CD4-positive, alpha-beta memory T cell (primary cell): ENCODE measurements at regions of chr18 and their contacts with region 1.

Region 1: DNA sequence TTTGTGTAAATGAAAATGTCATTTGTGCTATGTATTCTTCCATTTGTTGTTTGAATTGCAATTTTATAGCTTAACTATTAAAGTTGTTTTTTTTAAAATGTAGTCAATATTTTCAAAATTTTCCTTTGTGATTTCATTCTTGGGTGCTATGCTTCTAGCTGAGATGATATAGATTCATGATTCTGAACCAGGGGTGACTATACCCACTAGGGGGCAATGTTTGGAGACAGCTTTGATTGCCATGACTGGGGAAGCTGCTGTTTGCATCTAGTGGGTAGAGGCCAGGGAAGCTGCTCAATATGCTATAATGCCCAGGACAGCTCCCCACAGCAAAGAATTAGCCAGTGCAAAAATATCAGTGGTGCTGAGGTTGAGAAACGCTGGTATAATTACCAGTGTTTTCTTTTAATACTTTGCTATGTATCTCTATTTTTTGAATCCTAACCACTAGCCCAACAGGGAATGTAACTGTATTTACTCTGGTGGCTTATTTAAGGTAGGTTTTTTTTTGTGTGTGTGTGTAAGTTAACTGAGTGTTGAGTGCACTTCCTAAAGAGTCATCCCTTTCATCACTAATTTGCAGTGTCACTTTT is 99.7 kb downstream of the MEP1B start:
- DNase-seq: peak in 4 of 5 donors; percentile 6 to 22 (median 14)
- H3K4me3 ChIP-seq: no peak overlapping the region
- H3K4me3 Mint-ChIP-seq: no peak overlapping the region
- H3K27ac ChIP-seq: no peak overlapping the region
- H3K27ac Mint-ChIP-seq: no peak overlapping the region
- H3K4me1 ChIP-seq: no peaks in the 10 kb centered on the region
- H3K4me1 Mint-ChIP-seq: no peaks in the 10 kb centered on the region
- H3K27me3 ChIP-seq: no peaks in the 10 kb centered on the region
- H3K27me3 Mint-ChIP-seq: peaks cover 4 to 7% of the 10 kb centered on the region in 2 donors

Region 2: DNA sequence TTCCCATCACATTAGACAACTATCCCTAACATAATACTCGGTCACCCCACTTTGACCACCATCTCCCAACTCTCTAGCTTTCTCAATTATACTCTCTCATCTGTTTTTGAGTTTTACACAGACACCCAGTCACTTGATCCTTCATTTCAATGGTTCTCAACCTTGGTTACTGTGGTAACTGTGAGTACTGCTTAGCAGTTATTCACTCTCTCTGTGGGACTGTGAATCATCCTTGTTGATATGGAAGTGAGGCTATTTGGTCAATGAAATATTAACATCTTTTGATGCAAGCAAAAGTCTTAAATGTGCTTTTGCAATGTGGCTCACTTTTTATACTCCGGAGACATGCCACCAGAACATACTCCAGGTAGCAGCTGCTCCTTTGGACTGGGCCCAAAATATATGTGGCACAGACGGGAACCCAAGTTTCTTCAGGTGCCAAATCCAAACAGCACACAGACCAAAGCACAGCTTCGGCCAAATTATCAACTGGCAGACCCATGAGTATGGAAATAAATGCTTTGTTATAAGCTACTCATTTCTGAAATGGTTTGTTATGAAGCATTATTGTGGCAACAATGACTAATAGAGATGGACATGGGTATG is 453.9 kb before region 1 on chr18:
- CTCF ChIA-PET with region 1: no interaction called
- POLR2A ChIA-PET with region 1: no interaction called
- intact Hi-C with region 1: no loop called
- DNase-seq: no peak
- H3K4me3 ChIP-seq: no peak overlapping the region
- H3K4me3 Mint-ChIP-seq: no peak overlapping the region
- H3K27ac ChIP-seq: no peak overlapping the region
- H3K27ac Mint-ChIP-seq: peak overlapping the region in 2 of 7 donors; percentile 1 to 42
- H3K4me1 ChIP-seq: no peaks in the 10 kb centered on the region
- H3K4me1 Mint-ChIP-seq: peaks cover 0 to 9% (median 0%) of the 10 kb centered on the region in 4 donors
- H3K27me3 ChIP-seq: no peaks in the 10 kb centered on the region
- H3K27me3 Mint-ChIP-seq: no peaks in the 10 kb centered on the region

Region 3: DNA sequence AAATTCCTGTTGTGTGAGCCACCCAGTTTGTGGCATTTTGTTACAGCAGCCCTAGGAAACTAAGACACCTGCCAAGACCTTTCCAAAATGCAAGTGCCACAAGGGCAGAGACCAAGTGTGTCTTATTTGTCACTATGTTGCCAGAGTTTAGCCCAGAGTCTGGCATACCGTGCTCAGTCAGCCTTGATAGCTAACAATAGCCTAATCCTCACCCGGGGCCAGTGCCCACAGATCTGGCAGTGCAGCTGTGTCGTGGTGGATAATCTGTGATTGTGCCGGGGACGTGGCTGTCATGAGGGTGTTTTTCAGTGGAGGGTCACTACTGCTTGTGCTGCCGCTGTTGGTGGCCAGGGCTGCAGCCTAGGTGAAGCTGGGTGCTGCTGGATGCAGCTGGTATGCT is 46.2 kb before region 1 on chr18:
- CTCF ChIA-PET with region 1: no interaction called
- POLR2A ChIA-PET with region 1: no interaction called
- intact Hi-C with region 1: no loop called
- DNase-seq: no peak
- H3K4me3 ChIP-seq: no peak overlapping the region
- H3K4me3 Mint-ChIP-seq: no peak overlapping the region
- H3K27ac ChIP-seq: no peak overlapping the region
- H3K27ac Mint-ChIP-seq: no peak overlapping the region
- H3K4me1 ChIP-seq: no peaks in the 10 kb centered on the region
- H3K4me1 Mint-ChIP-seq: no peaks in the 10 kb centered on the region
- H3K27me3 ChIP-seq: no peaks in the 10 kb centered on the region
- H3K27me3 Mint-ChIP-seq: peaks cover 2 to 9% of the 10 kb centered on the region in 2 donors

Region 4: DNA sequence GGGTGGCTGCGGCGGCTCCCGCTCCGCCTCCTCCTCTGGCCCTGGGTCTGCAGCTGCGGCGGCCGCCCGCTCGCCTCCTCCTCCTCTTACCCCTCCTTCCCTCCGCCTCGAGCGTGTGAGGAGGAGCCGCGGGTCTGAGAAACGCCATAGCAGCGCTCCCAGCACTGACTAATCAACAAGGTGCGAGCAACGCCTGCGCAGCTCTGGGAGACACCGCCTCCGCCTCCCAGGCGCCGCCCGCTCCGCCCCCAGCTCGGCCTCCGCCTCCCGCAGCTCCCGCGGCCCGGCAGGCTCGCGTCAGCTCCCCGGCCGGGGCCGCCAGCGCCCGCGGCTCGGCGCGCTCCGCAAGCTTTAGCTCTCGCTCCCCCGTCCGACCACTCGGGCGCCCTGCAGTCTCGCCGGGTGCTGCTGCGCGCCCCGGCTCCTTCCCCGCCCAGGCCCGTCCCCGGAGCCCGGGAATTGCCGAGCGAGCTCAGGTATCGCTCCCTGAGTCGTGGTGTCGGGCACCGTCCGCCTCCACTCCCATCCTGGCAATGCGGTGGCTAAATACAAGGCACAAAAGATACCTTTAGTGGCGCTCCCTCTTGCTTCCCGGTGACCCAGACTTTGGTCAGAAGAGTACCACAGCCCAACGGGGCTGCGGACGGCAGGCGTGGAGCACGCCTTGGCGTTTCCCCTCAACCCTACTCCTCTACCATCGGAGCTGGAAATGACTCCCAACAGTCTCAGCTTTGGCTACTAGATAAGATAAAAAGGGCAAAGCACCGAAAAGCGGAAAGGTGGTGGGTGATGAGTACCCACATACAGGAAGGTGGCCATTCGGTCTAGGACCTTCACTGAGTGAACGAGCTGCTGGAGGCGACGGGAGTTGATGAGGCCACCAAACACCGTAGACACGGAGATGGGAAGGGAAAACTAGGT is 181.4 kb after region 1 on chr18 and contains the start of gene GAREM1:
- CTCF ChIA-PET with region 1: interaction called, 21 read pairs
- POLR2A ChIA-PET with region 1: no interaction called
- intact Hi-C with region 1: loop called (anchors 1 kb)
- DNase-seq: peak; percentile 74 to 83 (median 78)
- H3K4me3 ChIP-seq: peak within 1 kb of the TSS; percentile 24 to 52
- H3K4me3 Mint-ChIP-seq: peak within 1 kb of the TSS; percentile 82 to 91 (median 88)
- H3K27ac ChIP-seq: no peak within 1 kb of the TSS
- H3K27ac Mint-ChIP-seq: peak within 1 kb of the TSS in 6 of 7 donors; percentile 45 to 88 (median 85)
- H3K4me1 ChIP-seq: peaks cover 33% of the 10 kb centered on the region
- H3K4me1 Mint-ChIP-seq: peaks cover 16 to 42% (median 30%) of the 10 kb centered on the region in 4 donors
- H3K27me3 ChIP-seq: peaks cover 8% of the 10 kb centered on the region
- H3K27me3 Mint-ChIP-seq: peaks cover 25 to 28% of the 10 kb centered on the region in 2 donors
- total RNA-seq, gene GAREM1: 0.28 to 0.52 TPM